H1 (cell line): ENCODE measurements at regions of chr6 and their contacts with region 1.

Region 1: DNA sequence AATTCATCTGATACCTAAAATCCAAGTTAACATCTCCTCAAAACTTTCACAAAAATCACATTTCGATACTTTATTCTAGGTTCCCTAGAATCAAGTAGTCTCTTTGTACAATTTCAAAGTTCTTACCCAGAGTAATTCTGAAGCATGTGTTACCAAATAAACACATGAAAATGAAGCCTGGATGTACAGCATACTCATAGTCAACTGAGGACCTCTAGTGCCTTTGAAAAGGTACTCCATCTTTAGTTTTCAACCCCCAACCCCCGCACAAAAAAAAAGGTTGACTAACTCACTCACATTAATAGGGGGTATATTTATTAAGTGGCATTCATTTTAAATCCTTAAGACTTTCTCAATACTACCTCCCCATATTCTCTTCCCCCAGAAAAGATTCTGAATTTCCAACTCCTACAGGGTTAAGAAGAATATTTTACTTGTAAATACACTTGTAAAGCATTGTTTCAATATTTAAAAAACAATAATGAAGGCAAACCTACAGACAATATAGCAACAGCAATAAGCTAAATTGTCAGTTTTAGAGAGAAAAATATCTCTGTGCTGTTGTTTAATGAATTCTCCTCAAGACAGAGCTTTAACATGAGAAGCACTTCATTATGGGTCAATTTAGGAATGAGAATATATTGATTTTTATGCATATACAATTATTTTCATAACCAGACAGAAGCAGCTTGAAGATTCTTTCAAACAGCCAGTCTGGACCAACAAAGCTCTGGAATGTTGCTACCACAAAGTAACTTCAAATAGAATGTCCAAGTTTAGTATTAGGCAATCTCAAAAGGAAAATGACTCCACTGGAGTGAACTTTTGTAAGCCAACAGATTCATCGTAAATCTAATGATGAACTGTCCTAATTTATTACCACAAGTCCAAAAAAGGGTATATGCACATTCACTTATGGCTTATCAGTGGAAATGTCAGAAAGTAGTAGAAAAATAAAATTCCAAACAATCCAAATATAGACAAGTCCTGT is 3.3 kb downstream of the PLN start:
- DNase-seq: no peak
- H3K4me3 ChIP-seq: no peak overlapping the region
- H3K27ac ChIP-seq: no peak overlapping the region
- H3K4me1 ChIP-seq: no peaks in the 10 kb centered on the region; a peak in 1 of 7 replicates
- H3K27me3 ChIP-seq: no peaks in the 10 kb centered on the region
- CTCF ChIP-seq: peak in 2 of 3 experiments; percentile 37 to 55; a peak in 2 of 4 replicates
- EP300 ChIP-seq: no peak
- POLR2A ChIP-seq: no peak
- RAD21 ChIP-seq: peak; percentile 80

Region 2: GRCh38 chr6:118509009-118509617 is 42.2 kb before region 1 on chr6:
- CTCF ChIA-PET with region 1: interaction called, 12 read pairs
- POLR2A ChIA-PET with region 1: no interaction called
- DNase-seq: no peak
- H3K4me3 ChIP-seq: no peak overlapping the region
- H3K27ac ChIP-seq: no peak overlapping the region
- H3K4me1 ChIP-seq: peaks cover 0 to 4% (median 0%) of the 10 kb centered on the region in 4 experiments; a peak in 1 of 7 replicates
- H3K27me3 ChIP-seq: no peaks in the 10 kb centered on the region
- CTCF ChIP-seq: peak in 2 of 3 experiments; percentile 45 to 48; a peak in 3 of 4 replicates
- EP300 ChIP-seq: no peak
- POLR2A ChIP-seq: no peak
- RAD21 ChIP-seq: peak; percentile 71 to 72

Region 3: DNA sequence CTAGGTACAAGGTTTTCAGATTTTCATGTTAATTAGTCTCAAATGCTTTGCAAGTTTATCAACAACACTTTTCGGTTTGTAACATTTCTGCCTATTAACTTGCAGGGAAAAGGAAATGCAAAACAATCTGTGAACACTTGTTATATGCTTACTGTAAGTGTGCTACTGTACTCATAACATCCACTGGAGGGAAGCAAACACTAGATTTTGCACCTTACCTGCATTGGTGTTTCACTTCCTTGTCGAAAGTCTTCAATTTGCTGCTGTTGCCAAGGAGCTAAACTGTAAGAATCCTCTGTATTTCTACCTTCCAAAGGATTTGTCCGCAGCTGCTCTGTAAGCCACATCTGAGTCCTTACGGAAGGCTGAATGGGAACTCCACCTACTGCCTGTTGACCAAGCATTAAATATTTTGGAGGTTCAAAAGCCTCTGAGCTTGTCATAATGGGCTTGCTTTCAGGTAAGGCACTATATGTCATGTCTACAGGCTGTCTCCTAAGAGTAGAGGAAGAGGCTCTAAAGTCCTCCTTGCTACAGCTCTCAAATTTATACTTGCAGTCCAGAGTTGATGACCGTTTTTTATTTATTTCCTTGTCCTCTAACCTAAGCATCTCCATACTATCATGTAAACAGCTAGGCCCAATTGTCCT is 14.1 kb after region 1 on chr6:
- CTCF ChIA-PET with region 1: interaction called, 12 read pairs
- POLR2A ChIA-PET with region 1: no interaction called
- DNase-seq: no peak
- H3K4me3 ChIP-seq: no peak overlapping the region
- H3K27ac ChIP-seq: no peak overlapping the region
- H3K4me1 ChIP-seq: peaks cover 0 to 7% (median 4%) of the 10 kb centered on the region in 4 experiments; a peak in 5 of 7 replicates
- H3K27me3 ChIP-seq: peaks cover 0 to 1% (median 0%) of the 10 kb centered on the region in 4 experiments; a peak in 1 of 7 replicates
- CTCF ChIP-seq: peak in 2 of 3 experiments; percentile 58 to 70; a peak in 3 of 4 replicates
- EP300 ChIP-seq: no peak
- POLR2A ChIP-seq: no peak
- RAD21 ChIP-seq: peak; percentile 81 to 83